ENCODE measurements at regions of chr12 and their contacts with region 1.

Region 1: GRCh38 chr12:56224102-56224701 is at the start of gene NABP2:
- DNase-seq: peak; percentile 73 to 96 (median 88)
- ATAC-seq: peak; percentile 66
- H3K4me3 ChIP-seq: peak within 1 kb of the TSS; percentile 70
- H3K4me3 Mint-ChIP-seq: peak within 1 kb of the TSS; percentile 98
- H3K27ac ChIP-seq: peak within 1 kb of the TSS; percentile 60 to 81
- H3K27ac Mint-ChIP-seq: peak within 1 kb of the TSS; percentile 100
- H3K4me1 ChIP-seq: peaks cover 56% of the 10 kb centered on the region
- H3K4me1 Mint-ChIP-seq: peaks cover 48% of the 10 kb centered on the region
- H3K27me3 ChIP-seq: no peaks in the 10 kb centered on the region
- H3K27me3 Mint-ChIP-seq: no peaks in the 10 kb centered on the region
- CTCF ChIP-seq: peak; percentile 88
- total RNA-seq, gene NABP2: 7.6 to 9.1 TPM

Region 2: GRCh38 chr12:56127888-56128669 is 96.1 kb before region 1 on chr12 and contains the start of gene ESYT1:
- CTCF ChIA-PET with region 1: interaction called, 15 read pairs
- POLR2A ChIA-PET with region 1: interaction called, 34 read pairs
- intact Hi-C with region 1: no loop called
- DNase-seq: peak; percentile 93 to 100 (median 96)
- ATAC-seq: peak; percentile 90
- H3K4me3 ChIP-seq: peak within 1 kb of the TSS; percentile 99
- H3K4me3 Mint-ChIP-seq: peak within 1 kb of the TSS; percentile 97
- H3K27ac ChIP-seq: peak within 1 kb of the TSS; percentile 77
- H3K27ac Mint-ChIP-seq: peak within 1 kb of the TSS; percentile 86
- H3K4me1 ChIP-seq: peaks cover 66% of the 10 kb centered on the region
- H3K4me1 Mint-ChIP-seq: peaks cover 69% of the 10 kb centered on the region
- H3K27me3 ChIP-seq: no peaks in the 10 kb centered on the region
- H3K27me3 Mint-ChIP-seq: no peaks in the 10 kb centered on the region
- CTCF ChIP-seq: no peak
- total RNA-seq, gene ESYT1: 88.5 to 90.3 TPM

Region 3: GRCh38 chr12:56158029-56158925 is 65.9 kb before region 1 on chr12 and contains the start of gene MYL6:
- CTCF ChIA-PET with region 1: no interaction called
- POLR2A ChIA-PET with region 1: interaction called, 11 read pairs
- intact Hi-C with region 1: no loop called
- DNase-seq: peak; percentile 77 to 98 (median 86)
- ATAC-seq: peak; percentile 80
- H3K4me3 ChIP-seq: peak within 1 kb of the TSS; percentile 78
- H3K4me3 Mint-ChIP-seq: peak within 1 kb of the TSS; percentile 96
- H3K27ac ChIP-seq: peak within 1 kb of the TSS; percentile 84 to 92
- H3K27ac Mint-ChIP-seq: peak within 1 kb of the TSS; percentile 92
- H3K4me1 ChIP-seq: peaks cover 52% of the 10 kb centered on the region
- H3K4me1 Mint-ChIP-seq: peaks cover 40% of the 10 kb centered on the region
- H3K27me3 ChIP-seq: no peaks in the 10 kb centered on the region
- H3K27me3 Mint-ChIP-seq: no peaks in the 10 kb centered on the region
- CTCF ChIP-seq: peak; percentile 6
- total RNA-seq, gene MYL6: 670 to 673 TPM

Region 4: GRCh38 chr12:56258057-56258819 is 34.0 kb after region 1 on chr12 and contains the start of gene ANKRD52:
- CTCF ChIA-PET with region 1: interaction called, 7 read pairs
- POLR2A ChIA-PET with region 1: interaction called, 19 read pairs
- intact Hi-C with region 1: loop called (anchors 2 to 5 kb)
- DNase-seq: peak; percentile 59 to 94 (median 75)
- ATAC-seq: peak; percentile 94
- H3K4me3 ChIP-seq: peak within 1 kb of the TSS; percentile 96
- H3K4me3 Mint-ChIP-seq: peak within 1 kb of the TSS; percentile 98
- H3K27ac ChIP-seq: peak within 1 kb of the TSS; percentile 31 to 58
- H3K27ac Mint-ChIP-seq: peak within 1 kb of the TSS; percentile 77
- H3K4me1 ChIP-seq: peaks cover 27% of the 10 kb centered on the region
- H3K4me1 Mint-ChIP-seq: peaks cover 20% of the 10 kb centered on the region
- H3K27me3 ChIP-seq: no peaks in the 10 kb centered on the region
- H3K27me3 Mint-ChIP-seq: no peaks in the 10 kb centered on the region
- CTCF ChIP-seq: peak; percentile 26
- total RNA-seq, gene ANKRD52: 23.9 to 30.8 TPM

Region 5: DNA sequence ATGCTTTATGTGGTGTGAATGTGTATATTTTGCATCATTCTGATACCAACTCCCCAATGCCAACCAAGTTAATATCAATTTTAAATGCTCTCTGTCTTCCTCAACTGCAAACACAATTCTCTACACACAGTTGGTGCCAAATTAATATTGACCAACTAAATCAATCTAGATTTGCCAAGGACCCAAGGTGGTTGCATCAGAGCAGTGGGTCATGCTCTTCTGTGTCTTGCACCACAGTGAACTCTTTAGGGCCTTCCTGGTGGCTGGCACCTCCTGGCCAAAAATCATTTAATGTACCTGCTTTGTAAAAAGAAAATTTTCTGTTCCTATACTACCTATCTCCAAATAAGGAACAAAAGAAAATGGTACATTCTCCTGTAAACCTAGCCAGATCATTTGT is 56.6 kb after region 1 on chr12:
- CTCF ChIA-PET with region 1: no interaction called
- POLR2A ChIA-PET with region 1: no interaction called
- intact Hi-C with region 1: no loop called
- DNase-seq: no peak
- ATAC-seq: no peak
- H3K4me3 ChIP-seq: no peak overlapping the region
- H3K4me3 Mint-ChIP-seq: no peak overlapping the region
- H3K27ac ChIP-seq: no peak overlapping the region
- H3K27ac Mint-ChIP-seq: no peak overlapping the region
- H3K4me1 ChIP-seq: no peaks in the 10 kb centered on the region
- H3K4me1 Mint-ChIP-seq: no peaks in the 10 kb centered on the region
- H3K27me3 ChIP-seq: no peaks in the 10 kb centered on the region
- H3K27me3 Mint-ChIP-seq: no peaks in the 10 kb centered on the region
- CTCF ChIP-seq: no peak

Region 6: DNA sequence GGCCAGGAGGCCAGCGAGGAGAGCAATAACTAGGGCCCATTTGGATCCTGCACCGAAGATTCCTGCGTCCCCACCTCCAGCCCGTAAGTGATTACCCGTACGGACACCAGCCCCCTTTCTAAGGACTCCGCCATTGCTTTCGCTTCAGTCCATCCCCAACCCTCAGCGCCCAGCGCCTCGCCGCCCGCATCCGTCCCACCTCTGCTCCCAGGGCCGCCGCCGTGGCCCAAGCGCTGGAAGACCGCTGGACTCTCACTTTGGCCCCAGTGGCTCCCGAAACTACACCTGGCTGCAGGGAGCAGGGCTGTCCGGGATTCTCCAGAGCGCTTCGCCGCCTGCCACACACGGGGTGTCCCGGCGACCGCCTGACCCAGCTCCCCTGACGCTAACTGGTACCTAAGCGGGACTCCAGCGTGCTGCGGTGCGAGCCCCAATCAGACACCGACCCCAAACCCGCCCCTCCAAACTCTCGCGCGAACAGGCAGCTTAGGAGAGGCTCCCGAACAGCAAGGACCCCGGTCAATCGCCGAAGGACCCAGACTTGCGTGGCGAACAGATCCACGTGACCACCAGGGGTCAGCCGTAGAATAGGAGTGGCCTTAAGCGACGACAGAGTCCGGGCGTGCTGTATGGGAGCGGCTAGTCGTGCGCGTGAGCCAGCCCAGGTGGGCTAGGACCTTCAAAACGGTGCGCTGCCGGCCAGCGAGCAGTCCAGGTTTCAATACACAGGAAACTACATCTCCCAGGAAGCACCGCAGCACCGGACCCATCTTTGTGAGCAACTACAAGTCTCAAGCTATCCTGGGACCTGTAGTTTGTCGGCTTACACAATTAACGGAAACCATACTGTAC is 91.6 kb after region 1 on chr12 and contains the start of gene CNPY2:
- CTCF ChIA-PET with region 1: no interaction called
- POLR2A ChIA-PET with region 1: interaction called, 14 read pairs
- intact Hi-C with region 1: no loop called
- DNase-seq: peak; percentile 86 to 96 (median 90)
- ATAC-seq: peak; percentile 93
- H3K4me3 ChIP-seq: peak within 1 kb of the TSS; percentile 100
- H3K4me3 Mint-ChIP-seq: peak within 1 kb of the TSS; percentile 99
- H3K27ac ChIP-seq: peak within 1 kb of the TSS; percentile 84 to 98
- H3K27ac Mint-ChIP-seq: peak within 1 kb of the TSS; percentile 98
- H3K4me1 ChIP-seq: peaks cover 17% of the 10 kb centered on the region
- H3K4me1 Mint-ChIP-seq: peaks cover 19% of the 10 kb centered on the region
- H3K27me3 ChIP-seq: no peaks in the 10 kb centered on the region
- H3K27me3 Mint-ChIP-seq: no peaks in the 10 kb centered on the region
- CTCF ChIP-seq: no peak
- total RNA-seq, gene CNPY2: 30.5 to 33.4 TPM

Measured in CD4-positive, alpha-beta T cell (primary cell).